HCT116 (cell line): ENCODE measurements at regions of chr9 and their contacts with region 1.

Region 1: GRCh38 chr9:18890372-18890771 is 142.6 kb downstream of the SAXO1 start:
- DNase-seq: no peak
- ATAC-seq: no peak
- H3K4me3 ChIP-seq: no peak overlapping the region
- H3K27ac ChIP-seq: no peak overlapping the region
- H3K4me1 ChIP-seq: no peaks in the 10 kb centered on the region
- H3K27me3 ChIP-seq: no peaks in the 10 kb centered on the region; the same call in 1 of the 2 replicates
- CTCF ChIP-seq: no peak
- POLR2A ChIP-seq: no peak
- RAD21 ChIP-seq: no peak

Region 2: GRCh38 chr9:18478501-18479361 is 411.6 kb before region 1 on chr9:
- CTCF ChIA-PET with region 1: no interaction called
- POLR2A ChIA-PET with region 1: no interaction called
- RAD21 ChIA-PET with region 1: no interaction called
- intact Hi-C with region 1: no loop called
- DNase-seq: no peak
- ATAC-seq: no peak
- H3K4me3 ChIP-seq: no peak overlapping the region
- H3K27ac ChIP-seq: no peak overlapping the region
- H3K4me1 ChIP-seq: no peaks in the 10 kb centered on the region
- H3K27me3 ChIP-seq: no peaks in the 10 kb centered on the region
- CTCF ChIP-seq: no peak
- POLR2A ChIP-seq: no peak
- RAD21 ChIP-seq: no peak

Region 3: GRCh38 chr9:18951936-18952335 is 61.6 kb after region 1 on chr9:
- CTCF ChIA-PET with region 1: no interaction called
- POLR2A ChIA-PET with region 1: no interaction called
- RAD21 ChIA-PET with region 1: no interaction called
- intact Hi-C with region 1: loop called (anchors 10 kb)
- DNase-seq: no peak
- ATAC-seq: no peak
- H3K4me3 ChIP-seq: no peak overlapping the region
- H3K27ac ChIP-seq: no peak overlapping the region
- H3K4me1 ChIP-seq: no peaks in the 10 kb centered on the region
- H3K27me3 ChIP-seq: peaks cover 30% of the 10 kb centered on the region; the same call in 1 of the 2 replicates
- CTCF ChIP-seq: no peak
- POLR2A ChIP-seq: no peak
- RAD21 ChIP-seq: no peak